ENCODE measurements at regions of chr2 and their contacts with region 1.

Region 1: GRCh38 chr2:222690564-222691200 is 19.2 kb downstream of the MOGAT1 start:
- DNase-seq: peak; percentile 59
- H3K4me3 Mint-ChIP-seq: no peak overlapping the region
- H3K27ac Mint-ChIP-seq: no peak overlapping the region
- H3K4me1 Mint-ChIP-seq: peaks cover 5% of the 10 kb centered on the region
- H3K27me3 Mint-ChIP-seq: peaks cover 8% of the 10 kb centered on the region

Region 2: DNA sequence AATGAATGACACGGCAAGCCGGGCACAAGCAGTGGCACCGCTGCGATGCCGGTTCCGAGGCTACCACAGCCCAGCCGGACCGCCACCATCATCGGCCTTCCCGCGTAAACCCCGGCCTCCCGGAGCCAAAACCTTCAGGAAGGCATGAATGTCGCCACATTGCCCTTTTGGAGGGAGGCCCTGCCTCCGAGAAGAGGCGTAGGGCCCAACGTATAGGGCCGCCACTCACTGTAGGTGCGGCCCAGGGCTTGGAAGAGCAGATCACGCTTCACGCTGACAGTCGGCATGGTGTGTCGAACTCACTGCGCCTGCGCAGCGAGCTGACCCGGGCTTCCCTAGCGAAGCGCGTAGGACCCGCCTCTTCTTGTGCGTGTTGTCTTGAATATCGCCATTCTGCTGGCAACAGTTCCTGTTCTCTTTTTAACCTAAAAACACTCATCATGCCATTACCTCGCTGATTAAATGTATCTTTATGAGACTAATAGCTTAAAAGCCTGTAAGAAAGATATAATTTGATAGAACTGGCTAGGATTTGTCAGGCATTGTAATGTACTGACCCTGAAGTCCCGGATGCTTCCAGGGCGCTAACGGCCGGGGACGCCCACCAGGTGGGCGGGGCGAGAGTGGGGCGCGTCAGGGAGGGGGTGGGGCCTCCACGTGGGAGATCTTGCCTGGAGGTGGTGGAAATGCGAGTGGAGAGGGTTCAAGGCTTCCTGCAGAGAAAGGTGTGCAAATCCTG is 34.7 kb before region 1 on chr2 and contains the start of gene FARSB:
- intact Hi-C with region 1: loop called (anchors 1 kb)
- DNase-seq: peak; percentile 90
- H3K4me3 Mint-ChIP-seq: peak within 1 kb of the TSS; percentile 95
- H3K27ac Mint-ChIP-seq: peak within 1 kb of the TSS; percentile 87
- H3K4me1 Mint-ChIP-seq: peaks cover 36% of the 10 kb centered on the region
- H3K27me3 Mint-ChIP-seq: no peaks in the 10 kb centered on the region
- total RNA-seq, gene FARSB: 48.9 and 53.4 TPM in 2 replicates

Region 3: DNA sequence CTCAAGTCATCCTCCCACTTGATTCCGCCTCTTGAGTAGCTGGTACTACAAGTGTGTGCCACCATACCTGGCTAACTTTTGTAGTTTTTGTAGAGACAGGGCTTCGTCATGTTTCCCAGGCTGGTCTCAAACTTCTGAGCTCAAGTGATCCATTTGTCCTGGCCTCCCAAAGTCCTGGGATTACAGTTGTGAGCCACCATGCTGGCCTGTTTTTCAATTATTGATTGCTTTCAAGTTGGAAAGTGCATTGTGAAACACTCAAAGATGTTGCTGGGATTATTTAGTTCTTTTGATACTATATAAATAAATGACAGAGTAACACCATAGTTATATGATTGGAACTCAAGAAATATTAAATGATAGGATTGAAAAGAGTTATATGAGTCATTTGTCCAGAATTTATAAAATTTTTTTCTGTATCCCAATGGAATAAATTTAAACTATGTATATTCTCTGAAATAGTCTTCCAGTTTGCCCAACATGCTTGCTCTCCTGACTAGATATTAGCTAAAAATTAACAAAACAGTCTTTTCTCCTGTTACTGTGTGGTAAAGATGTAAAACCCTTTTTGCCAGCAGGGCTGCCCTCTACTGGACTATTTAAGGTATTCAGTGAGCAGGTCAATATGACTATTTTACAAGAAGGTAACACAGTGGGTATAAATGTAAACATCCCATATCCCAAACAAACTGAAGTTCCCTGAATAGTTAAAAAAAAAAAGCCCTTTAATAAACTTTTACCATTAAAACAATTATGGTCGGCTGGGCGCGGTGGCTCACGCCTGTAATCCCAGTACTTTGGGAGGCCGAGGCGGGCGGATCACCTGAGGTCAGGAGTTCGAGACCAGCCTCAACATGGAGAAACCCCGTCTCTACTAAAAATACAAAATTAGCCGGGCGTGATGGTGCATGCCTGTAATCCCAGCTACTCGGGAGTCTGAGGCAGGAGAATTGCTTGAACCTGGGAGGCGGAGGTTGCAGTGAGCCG is 212.8 kb after region 1 on chr2:
- intact Hi-C with region 1: loop called (anchors 1 kb)
- DNase-seq: no peak
- H3K4me3 Mint-ChIP-seq: no peak overlapping the region
- H3K27ac Mint-ChIP-seq: no peak overlapping the region
- H3K4me1 Mint-ChIP-seq: peaks cover 15% of the 10 kb centered on the region
- H3K27me3 Mint-ChIP-seq: no peaks in the 10 kb centered on the region

Region 4: GRCh38 chr2:222939208-222939856 is 248.7 kb after region 1 on chr2:
- intact Hi-C with region 1: loop called (anchors 1 kb)
- DNase-seq: peak; percentile 55
- H3K4me3 Mint-ChIP-seq: no peak overlapping the region
- H3K27ac Mint-ChIP-seq: no peak overlapping the region
- H3K4me1 Mint-ChIP-seq: peaks cover 13% of the 10 kb centered on the region
- H3K27me3 Mint-ChIP-seq: no peaks in the 10 kb centered on the region